ENCODE measurements at regions of chr16 and their contacts with region 1.

Region 1: DNA sequence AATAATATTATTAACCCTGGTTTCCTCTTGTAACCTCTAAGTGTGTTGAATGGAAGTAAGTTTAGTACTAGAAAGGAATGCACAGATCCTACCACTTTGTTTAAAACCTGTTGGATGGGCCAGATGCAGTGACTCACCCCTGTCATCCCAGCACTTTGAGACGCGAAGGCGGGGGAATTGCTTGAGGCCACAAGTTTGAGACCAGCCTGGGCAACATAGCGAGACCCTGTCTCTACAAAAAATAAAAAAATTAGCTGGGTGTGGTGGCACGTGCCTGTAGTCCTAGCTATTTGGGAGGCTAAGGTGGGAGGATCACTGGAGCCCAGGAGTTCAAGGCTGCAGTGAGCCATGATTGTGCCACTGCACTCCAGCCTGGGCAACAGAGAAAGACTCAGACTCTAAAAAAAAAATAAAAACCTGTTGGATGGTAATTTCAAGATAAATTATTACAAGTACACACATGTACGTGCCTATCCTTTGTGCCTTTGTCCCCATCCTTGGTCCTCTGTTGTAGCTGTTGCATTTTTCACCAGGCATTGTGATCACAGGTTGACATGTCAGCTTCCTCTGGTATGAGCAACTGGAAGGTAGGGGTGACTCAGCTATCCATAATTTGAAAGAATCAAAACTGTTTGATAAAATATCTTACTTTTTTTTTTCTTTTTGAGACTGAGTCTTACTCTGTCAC is 30.7 kb upstream of the METTL9 start:
- DNase-seq: no peak
- ATAC-seq: no peak
- H3K4me3 ChIP-seq: no peak overlapping the region
- H3K27ac ChIP-seq: no peak overlapping the region
- H3K4me1 ChIP-seq: no peaks in the 10 kb centered on the region
- H3K27me3 ChIP-seq: no peaks in the 10 kb centered on the region

Region 2: GRCh38 chr16:21685034-21685455 is 116.4 kb after region 1 on chr16:
- intact Hi-C with region 1: no loop called
- DNase-seq: no peak
- ATAC-seq: no peak
- H3K4me3 ChIP-seq: no peak overlapping the region
- H3K27ac ChIP-seq: no peak overlapping the region
- H3K4me1 ChIP-seq: no peaks in the 10 kb centered on the region
- H3K27me3 ChIP-seq: no peaks in the 10 kb centered on the region

Region 3: DNA sequence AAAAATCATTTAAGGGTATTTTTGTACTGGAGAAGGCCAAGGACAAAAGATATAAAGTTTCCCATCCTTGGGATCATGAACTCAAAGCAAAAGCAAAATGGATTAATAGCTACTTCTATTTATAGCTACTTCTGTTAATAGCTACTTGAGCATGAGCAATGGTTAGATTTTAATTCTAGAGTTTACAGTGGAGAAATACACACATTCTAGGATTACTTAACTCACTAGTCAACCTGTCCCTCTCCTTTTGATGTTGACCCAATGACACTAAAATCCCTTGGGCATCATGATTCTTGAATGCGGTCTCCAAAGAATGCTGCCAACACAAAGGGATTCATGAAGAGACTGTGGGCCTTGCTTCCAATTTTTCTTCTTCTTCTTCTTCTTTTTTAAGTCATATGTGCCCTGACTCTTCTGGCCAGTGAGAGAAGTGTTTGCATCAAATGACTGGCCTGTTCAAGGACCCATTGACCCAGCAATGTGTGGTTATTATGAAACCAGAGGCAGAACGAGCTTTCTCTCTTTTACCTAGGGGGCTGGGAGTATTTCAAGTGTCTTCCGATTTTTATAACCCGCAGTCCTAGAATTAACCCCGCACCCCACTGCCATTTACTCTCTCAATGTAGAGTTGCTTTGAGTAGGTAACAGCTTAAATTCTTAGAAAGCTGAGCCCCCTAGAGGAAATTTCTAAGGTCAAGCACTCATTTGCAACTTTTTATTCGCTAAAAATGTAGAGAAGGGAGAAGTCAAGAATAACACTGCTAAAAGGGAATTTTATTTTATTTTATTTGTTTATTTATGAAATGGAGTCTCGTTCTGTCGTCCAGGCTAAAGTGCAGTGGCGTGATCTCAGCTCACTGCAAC is 129.8 kb after region 1 on chr16:
- intact Hi-C with region 1: no loop called
- DNase-seq: no peak
- ATAC-seq: no peak
- H3K4me3 ChIP-seq: no peak overlapping the region
- H3K27ac ChIP-seq: no peak overlapping the region
- H3K4me1 ChIP-seq: no peaks in the 10 kb centered on the region
- H3K27me3 ChIP-seq: no peaks in the 10 kb centered on the region

Region 4: GRCh38 chr16:22692916-22693637 is 1124.4 kb after region 1 on chr16:
- intact Hi-C with region 1: loop called in 1 of 4 experiments (anchors 2 kb)
- DNase-seq: no peak
- ATAC-seq: peak in 1 of 2 donors; percentile 10
- H3K4me3 ChIP-seq: no peak overlapping the region
- H3K27ac ChIP-seq: no peak overlapping the region
- H3K4me1 ChIP-seq: peaks cover 2% of the 10 kb centered on the region
- H3K27me3 ChIP-seq: no peaks in the 10 kb centered on the region